Activated naive CD4-positive, alpha-beta T cell treated with anti-CD3 and anti-CD28 coated beads for 36 hours (primary cell): ENCODE measurements at regions of chr2 and their contacts with region 1.

Region 1: DNA sequence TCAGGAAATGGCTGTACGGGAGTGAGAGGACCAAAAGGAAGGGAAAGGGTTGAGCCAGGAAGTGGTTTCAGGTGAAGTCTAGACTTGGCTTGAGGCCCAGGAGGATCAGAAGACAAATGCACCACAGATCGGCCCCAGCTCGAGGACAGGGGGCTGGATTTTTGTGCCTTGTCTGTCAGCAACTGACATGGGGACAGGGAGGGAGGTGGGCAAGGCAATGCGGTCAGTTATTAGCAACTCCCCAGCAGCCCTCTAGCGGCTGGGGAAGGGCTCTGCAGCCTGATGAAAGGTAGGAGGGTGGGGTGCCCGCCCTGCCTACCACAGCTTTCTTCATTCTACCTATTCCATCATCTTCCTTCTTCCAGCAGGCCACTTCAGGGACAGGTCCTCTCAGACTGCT is 50.0 kb downstream of the CPO start:
- DNase-seq: peak; percentile 28
- H3K4me3 Mint-ChIP-seq: peak overlapping the region; percentile 13
- H3K27ac Mint-ChIP-seq: peak overlapping the region; percentile 23
- H3K4me1 Mint-ChIP-seq: peaks cover 31% of the 10 kb centered on the region
- H3K27me3 Mint-ChIP-seq: no peaks in the 10 kb centered on the region

Region 2: DNA sequence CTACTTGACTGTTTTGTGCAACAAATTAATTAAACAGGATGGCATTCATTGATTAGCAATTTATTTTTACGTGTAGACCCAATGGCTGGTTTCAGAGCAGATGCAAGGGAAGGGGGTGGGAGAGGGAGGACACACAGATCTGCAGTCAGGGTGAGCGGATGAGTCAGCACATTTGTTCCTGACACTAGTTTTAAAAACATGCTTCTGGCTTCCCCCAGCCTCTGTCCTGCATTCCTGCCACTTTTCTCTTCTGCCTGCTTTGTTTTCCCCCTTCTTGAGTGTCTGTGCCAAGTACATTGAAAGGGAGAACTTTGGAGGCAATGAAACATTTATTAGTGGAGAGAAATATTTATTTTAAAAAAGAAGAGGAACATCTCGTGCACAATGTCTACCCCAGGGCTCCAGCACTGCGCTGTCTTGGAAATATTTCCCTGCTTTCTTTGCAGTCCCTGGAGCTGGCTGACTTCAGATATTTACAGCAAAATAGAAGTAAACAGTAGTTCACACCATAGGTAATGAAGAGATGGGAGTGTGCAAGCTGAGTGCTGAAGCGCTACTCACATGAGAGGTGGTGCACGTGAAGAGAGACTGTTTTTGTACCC is 1254.8 kb before region 1 on chr2:
- CTCF ChIA-PET with region 1: no interaction called
- intact Hi-C with region 1: no loop called
- DNase-seq: no peak
- H3K4me3 Mint-ChIP-seq: no peak overlapping the region
- H3K27ac Mint-ChIP-seq: no peak overlapping the region
- H3K4me1 Mint-ChIP-seq: no peaks in the 10 kb centered on the region
- H3K27me3 Mint-ChIP-seq: no peaks in the 10 kb centered on the region

Region 3: DNA sequence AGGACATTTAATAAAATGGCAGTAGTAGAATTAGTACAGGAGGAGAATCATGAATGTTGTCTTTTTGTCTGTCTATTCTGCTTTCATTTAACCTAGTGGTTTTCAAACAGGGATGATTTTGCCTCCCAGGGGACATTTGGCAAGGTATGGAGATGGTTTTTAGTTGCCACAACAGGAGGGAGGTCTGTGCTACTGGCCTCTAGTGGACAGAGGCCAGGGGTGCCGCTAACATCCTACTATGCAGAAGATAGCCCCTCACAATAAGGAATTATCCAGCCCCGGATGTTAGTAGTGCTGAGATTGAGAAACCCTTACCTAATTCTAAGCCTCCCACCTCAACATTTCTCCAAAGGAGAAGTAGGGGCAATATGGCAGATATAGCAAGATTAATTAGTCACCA is 205.6 kb before region 1 on chr2:
- CTCF ChIA-PET with region 1: no interaction called
- intact Hi-C with region 1: no loop called
- DNase-seq: no peak
- H3K4me3 Mint-ChIP-seq: no peak overlapping the region
- H3K27ac Mint-ChIP-seq: no peak overlapping the region
- H3K4me1 Mint-ChIP-seq: peaks cover 25% of the 10 kb centered on the region
- H3K27me3 Mint-ChIP-seq: no peaks in the 10 kb centered on the region

Region 4: GRCh38 chr2:207133820-207134519 is 144.7 kb after region 1 on chr2:
- CTCF ChIA-PET with region 1: no interaction called
- intact Hi-C with region 1: loop called (anchors 5 kb)
- DNase-seq: no peak
- H3K4me3 Mint-ChIP-seq: peak overlapping the region; percentile 7
- H3K27ac Mint-ChIP-seq: peak overlapping the region; percentile 30
- H3K4me1 Mint-ChIP-seq: peaks cover 91% of the 10 kb centered on the region
- H3K27me3 Mint-ChIP-seq: no peaks in the 10 kb centered on the region